ENCODE measurements at regions of chr4 and their contacts with region 1.

Region 1: GRCh38 chr4:169810325-169811323 is 52.9 kb upstream of the HPF1 start:
- DNase-seq: peak; percentile 22
- H3K4me3 Mint-ChIP-seq: no peak overlapping the region
- H3K27ac Mint-ChIP-seq: no peak overlapping the region
- H3K4me1 Mint-ChIP-seq: peaks cover 2% of the 10 kb centered on the region
- H3K27me3 Mint-ChIP-seq: peaks cover 2% of the 10 kb centered on the region

Region 2: GRCh38 chr4:170027181-170027829 is 216.7 kb after region 1 on chr4:
- CTCF ChIA-PET with region 1: interaction called, 11 read pairs
- intact Hi-C with region 1: loop called (anchors 5 kb)
- DNase-seq: peak; percentile 93
- H3K4me3 Mint-ChIP-seq: peak overlapping the region; percentile 83
- H3K27ac Mint-ChIP-seq: peak overlapping the region; percentile 38
- H3K4me1 Mint-ChIP-seq: peaks cover 7% of the 10 kb centered on the region
- H3K27me3 Mint-ChIP-seq: peaks cover 15% of the 10 kb centered on the region

Region 3: GRCh38 chr4:170040031-170040680 is 229.5 kb after region 1 on chr4:
- CTCF ChIA-PET with region 1: interaction called, 11 read pairs
- intact Hi-C with region 1: no loop called
- DNase-seq: no peak
- H3K4me3 Mint-ChIP-seq: no peak overlapping the region
- H3K27ac Mint-ChIP-seq: no peak overlapping the region
- H3K4me1 Mint-ChIP-seq: no peaks in the 10 kb centered on the region
- H3K27me3 Mint-ChIP-seq: no peaks in the 10 kb centered on the region

Region 4: DNA sequence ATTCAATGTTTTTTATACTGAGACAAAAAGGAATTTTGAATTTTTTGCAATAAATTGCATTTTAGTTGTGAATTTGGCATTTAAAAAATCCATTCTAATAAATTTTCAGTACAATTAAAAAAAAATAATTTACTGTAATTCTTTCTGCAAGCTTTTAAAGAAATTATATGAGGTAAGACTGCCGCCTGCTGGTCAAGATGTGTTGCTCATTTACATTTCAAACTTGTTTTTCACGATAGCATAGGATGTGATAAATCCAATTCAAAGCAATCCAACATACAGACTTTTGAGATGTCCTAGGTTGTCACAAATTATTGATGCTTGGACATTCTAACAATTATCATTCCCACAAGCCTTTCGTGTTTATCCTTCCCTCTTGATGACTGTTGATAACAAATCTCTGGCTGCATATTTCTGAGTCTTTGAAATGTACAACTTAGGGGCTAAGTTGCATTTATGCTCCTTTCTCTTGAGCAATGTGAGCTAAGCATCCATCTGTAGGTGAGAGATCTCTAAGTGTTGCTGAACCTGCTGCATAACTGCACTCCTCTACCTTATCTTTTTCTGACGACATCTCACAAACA is 237.2 kb after region 1 on chr4:
- CTCF ChIA-PET with region 1: interaction called, 38 read pairs
- intact Hi-C with region 1: loop called (anchors 1 kb)
- DNase-seq: peak; percentile 75
- H3K4me3 Mint-ChIP-seq: no peak overlapping the region
- H3K27ac Mint-ChIP-seq: no peak overlapping the region
- H3K4me1 Mint-ChIP-seq: no peaks in the 10 kb centered on the region
- H3K27me3 Mint-ChIP-seq: no peaks in the 10 kb centered on the region

Region 5: DNA sequence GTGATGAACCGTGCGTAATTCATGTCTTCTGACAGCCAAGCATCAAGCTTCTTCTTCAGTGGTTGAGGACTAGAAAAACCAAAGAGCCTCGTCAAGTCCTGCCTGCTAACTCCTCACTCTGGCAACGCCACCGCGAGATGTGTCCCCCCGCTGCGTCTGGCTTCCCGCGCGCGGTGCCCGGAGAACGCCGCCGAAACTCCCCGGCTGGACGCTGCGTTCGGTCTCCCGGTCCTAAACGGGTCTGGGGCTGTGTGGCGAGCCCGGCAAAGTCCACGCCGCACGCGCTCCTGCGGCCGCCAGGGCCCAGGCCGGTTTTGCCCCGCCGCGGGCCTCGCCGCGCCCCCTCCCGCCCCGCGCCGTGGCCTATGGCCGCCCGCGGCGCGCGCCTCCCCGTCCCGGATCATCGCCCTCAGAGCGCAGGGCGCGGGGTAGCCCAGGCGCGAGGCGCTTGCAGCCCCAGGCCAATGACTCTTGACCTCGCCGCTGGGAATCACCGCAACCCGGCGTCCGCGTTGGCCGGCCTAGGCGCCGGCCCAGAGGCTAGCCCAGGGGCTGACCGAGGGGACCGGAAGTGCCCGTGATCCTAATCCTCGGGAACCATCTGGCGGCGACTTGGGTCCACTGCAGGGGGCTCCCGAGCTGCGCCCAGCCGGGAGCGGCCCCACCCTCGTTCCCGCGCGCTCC is 279.2 kb after region 1 on chr4 and contains the start of gene AADAT:
- CTCF ChIA-PET with region 1: interaction called, 8 read pairs
- intact Hi-C with region 1: loop called (anchors 1 kb)
- DNase-seq: peak; percentile 27
- H3K4me3 Mint-ChIP-seq: peak within 1 kb of the TSS; percentile 61
- H3K27ac Mint-ChIP-seq: no peak within 1 kb of the TSS
- H3K4me1 Mint-ChIP-seq: peaks cover 13% of the 10 kb centered on the region
- H3K27me3 Mint-ChIP-seq: peaks cover 47% of the 10 kb centered on the region
- total RNA-seq, gene AADAT: not detected

Region 6: GRCh38 chr4:170259631-170260153 is 449.1 kb after region 1 on chr4:
- CTCF ChIA-PET with region 1: no interaction called
- intact Hi-C with region 1: loop called (anchors 5 kb)
- DNase-seq: peak; percentile 73
- H3K4me3 Mint-ChIP-seq: no peak overlapping the region
- H3K27ac Mint-ChIP-seq: no peak overlapping the region
- H3K4me1 Mint-ChIP-seq: no peaks in the 10 kb centered on the region
- H3K27me3 Mint-ChIP-seq: no peaks in the 10 kb centered on the region

Measured in activated naive CD4-positive, alpha-beta T cell treated with anti-CD3 and anti-CD28 coated beads for 36 hours (primary cell).